ENCODE measurements at regions of chr20 and their contacts with region 1.

Region 1: GRCh38 chr20:47725248-47725973 is 59.9 kb downstream of the SULF2 start:
- DNase-seq: peak; percentile 79
- ATAC-seq: peak; percentile 84
- H3K4me3 Mint-ChIP-seq: no peak overlapping the region
- H3K27ac Mint-ChIP-seq: no peak overlapping the region
- H3K4me1 Mint-ChIP-seq: peaks cover 14% of the 10 kb centered on the region
- H3K27me3 Mint-ChIP-seq: no peaks in the 10 kb centered on the region
- CTCF ChIP-seq: peak; percentile 95

Region 2: GRCh38 chr20:47677635-47678453 is 47.6 kb before region 1 on chr20:
- CTCF ChIA-PET with region 1: interaction called, 15 read pairs
- POLR2A ChIA-PET with region 1: no interaction called
- DNase-seq: peak; percentile 85
- ATAC-seq: peak; percentile 76
- H3K4me3 Mint-ChIP-seq: no peak overlapping the region
- H3K27ac Mint-ChIP-seq: no peak overlapping the region
- H3K4me1 Mint-ChIP-seq: peaks cover 13% of the 10 kb centered on the region
- H3K27me3 Mint-ChIP-seq: no peaks in the 10 kb centered on the region
- CTCF ChIP-seq: peak; percentile 89

Region 3: DNA sequence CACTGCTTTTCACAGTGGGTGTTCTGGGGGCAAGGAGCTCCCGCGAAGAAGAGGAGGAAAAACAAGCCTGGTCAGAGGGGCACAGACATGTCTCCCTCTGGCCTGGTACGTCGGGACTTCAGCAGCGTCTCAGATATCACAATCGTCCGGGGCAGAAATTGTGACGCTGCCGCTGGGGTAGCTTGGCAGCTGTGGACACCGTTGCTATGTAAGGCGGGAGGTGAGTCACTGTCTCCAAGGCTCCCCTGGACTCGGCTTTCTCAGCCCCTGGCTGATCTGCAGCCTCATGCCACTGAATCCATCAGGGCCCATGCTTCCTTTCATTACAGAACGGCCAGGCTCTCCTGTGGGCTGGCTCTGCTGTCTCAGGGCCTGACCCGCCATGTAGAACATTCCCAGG is 38.9 kb before region 1 on chr20:
- CTCF ChIA-PET with region 1: interaction called, 11 read pairs
- POLR2A ChIA-PET with region 1: no interaction called
- DNase-seq: no peak
- ATAC-seq: no peak
- H3K4me3 Mint-ChIP-seq: no peak overlapping the region
- H3K27ac Mint-ChIP-seq: no peak overlapping the region
- H3K4me1 Mint-ChIP-seq: peaks cover 30% of the 10 kb centered on the region
- H3K27me3 Mint-ChIP-seq: peaks cover 7% of the 10 kb centered on the region
- CTCF ChIP-seq: no peak

Region 4: DNA sequence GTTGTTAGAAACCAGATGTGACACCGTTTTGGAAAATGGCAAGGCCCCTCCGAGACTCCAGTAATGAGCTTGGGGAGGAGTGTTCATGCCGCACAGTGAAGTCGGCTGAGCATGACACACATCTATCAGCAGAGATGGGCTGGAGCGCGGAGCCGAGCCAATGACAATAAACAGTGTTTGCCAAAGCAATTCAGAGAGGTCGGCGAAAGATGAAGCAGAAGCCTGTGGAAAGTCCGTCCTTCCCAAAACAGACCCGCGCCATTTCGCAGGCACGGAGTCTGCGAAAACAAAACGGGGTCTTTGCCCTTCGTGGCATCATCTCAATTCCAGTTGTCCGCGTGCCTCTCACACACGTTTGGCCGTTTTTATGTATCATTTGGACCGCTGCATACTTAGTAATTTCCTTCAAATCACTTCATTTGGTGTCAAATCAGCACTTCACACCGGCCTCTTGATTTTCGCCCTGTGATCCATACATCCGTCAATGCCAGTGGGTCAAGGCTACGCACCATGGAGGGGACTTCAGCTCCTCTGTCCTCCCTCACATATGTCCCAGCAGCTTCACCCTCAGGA is 11.4 kb before region 1 on chr20:
- CTCF ChIA-PET with region 1: interaction called, 10 read pairs
- POLR2A ChIA-PET with region 1: no interaction called
- DNase-seq: no peak
- ATAC-seq: no peak
- H3K4me3 Mint-ChIP-seq: no peak overlapping the region
- H3K27ac Mint-ChIP-seq: no peak overlapping the region
- H3K4me1 Mint-ChIP-seq: peaks cover 13% of the 10 kb centered on the region; the same call in 1 of the 2 replicates
- H3K27me3 Mint-ChIP-seq: no peaks in the 10 kb centered on the region
- CTCF ChIP-seq: no peak

Measured in WTC11 (cell line).